ENCODE measurements at regions of chr12 and their contacts with region 1.

Region 1: DNA sequence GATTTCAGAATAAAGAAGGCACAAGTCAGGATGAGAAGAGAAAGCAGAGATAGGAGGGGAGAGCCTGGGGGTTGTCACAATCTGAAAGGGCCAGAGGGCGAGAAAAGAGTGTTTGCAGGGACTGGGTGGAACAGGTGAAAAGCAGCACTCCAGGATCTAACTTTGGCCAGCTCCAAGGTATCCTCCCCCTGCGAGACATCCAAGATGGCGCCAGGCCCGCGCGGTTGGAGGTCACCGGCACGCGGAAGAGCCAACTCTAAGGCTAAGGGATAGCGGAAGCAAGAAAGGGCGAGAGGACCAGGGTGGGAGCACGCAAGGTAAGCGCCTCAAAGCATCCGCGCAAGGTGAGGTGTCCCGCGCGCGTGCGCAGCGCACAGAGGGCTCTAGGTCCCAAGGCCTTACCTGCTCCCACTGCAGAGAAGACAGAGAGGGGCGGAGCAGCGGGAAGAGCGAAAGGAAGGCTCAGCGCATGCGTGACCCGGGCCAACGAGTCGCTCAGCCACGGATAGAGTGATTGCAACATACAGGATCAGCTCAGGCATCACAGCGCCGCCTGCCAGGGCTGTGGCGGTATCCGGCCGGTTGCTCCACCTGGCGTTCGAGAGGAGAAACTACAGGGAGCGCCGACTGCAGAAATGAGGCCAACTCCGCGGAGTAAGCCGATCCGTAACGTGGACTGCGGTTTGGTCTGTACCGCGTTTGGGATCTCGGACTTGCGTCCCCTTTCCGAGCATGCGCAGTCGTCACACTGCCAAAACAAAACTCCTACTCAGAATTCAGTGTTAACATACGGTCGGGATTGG is at the start of gene ATP5MC2:
- DNase-seq: peak; percentile 88
- H3K4me3 ChIP-seq: peak within 1 kb of the TSS; percentile 90
- CTCF ChIP-seq: peak; percentile 100

Region 2: DNA sequence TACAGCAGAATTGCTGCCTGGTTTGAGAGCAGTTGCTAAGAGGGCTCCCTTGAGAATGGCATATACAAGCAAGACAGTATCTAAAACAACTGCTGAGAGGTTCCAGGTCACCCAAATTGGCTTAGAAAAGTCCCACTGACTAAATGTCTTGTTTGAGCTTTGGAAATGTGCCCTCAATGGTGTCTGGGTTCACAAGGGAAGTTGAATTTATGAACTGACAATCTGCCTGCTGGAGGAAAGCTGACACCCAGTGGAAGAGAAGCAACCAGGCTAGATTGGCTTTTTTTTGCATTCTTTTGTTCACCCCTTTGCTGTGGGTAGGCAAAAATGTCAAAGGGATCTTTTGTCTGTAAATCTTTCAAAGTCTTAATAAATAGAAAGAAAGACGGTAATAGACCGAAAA is 124.0 kb before region 1 on chr12:
- CTCF ChIA-PET with region 1: interaction called, 28 read pairs
- POLR2A ChIA-PET with region 1: no interaction called
- DNase-seq: no peak
- H3K4me3 ChIP-seq: no peak overlapping the region
- CTCF ChIP-seq: no peak

Region 3: GRCh38 chr12:53568809-53569557 is 106.9 kb before region 1 on chr12:
- CTCF ChIA-PET with region 1: interaction called, 17 read pairs
- POLR2A ChIA-PET with region 1: no interaction called
- DNase-seq: no peak
- H3K4me3 ChIP-seq: no peak overlapping the region
- CTCF ChIP-seq: no peak

Region 4: GRCh38 chr12:53625946-53626701 is 49.7 kb before region 1 on chr12 and contains the start of gene ATF7:
- CTCF ChIA-PET with region 1: interaction called, 39 read pairs
- POLR2A ChIA-PET with region 1: no interaction called
- DNase-seq: peak; percentile 80
- H3K4me3 ChIP-seq: peak within 1 kb of the TSS; percentile 86
- CTCF ChIP-seq: peak; percentile 1

Region 5: GRCh38 chr12:53652366-53652765 is 23.5 kb before region 1 on chr12:
- CTCF ChIA-PET with region 1: interaction called, 10 read pairs
- POLR2A ChIA-PET with region 1: no interaction called
- DNase-seq: peak; percentile 59
- H3K4me3 ChIP-seq: no peak overlapping the region
- CTCF ChIP-seq: no peak

Region 6: DNA sequence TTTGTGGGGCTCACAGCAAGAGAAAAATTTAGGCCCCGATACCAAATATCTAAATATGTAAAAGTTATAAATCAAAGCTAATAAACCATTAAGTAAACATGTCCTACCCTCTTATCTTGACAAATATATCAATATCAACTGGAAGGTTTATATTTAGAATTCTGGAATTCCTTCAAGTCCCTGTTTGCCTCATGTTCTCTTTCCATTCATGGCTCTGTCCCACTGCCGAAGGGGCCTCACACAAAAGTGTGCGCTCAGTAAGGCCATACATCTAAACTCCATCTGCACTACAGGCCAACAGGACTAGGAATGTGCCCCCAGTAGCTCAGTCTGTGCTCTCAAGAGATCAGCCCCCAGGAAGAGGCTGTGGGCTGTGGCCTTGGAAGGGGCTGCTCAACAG is 10.6 kb after region 1 on chr12:
- CTCF ChIA-PET with region 1: interaction called, 28 read pairs
- POLR2A ChIA-PET with region 1: no interaction called
- DNase-seq: no peak
- H3K4me3 ChIP-seq: no peak overlapping the region
- CTCF ChIP-seq: no peak

Region 7: DNA sequence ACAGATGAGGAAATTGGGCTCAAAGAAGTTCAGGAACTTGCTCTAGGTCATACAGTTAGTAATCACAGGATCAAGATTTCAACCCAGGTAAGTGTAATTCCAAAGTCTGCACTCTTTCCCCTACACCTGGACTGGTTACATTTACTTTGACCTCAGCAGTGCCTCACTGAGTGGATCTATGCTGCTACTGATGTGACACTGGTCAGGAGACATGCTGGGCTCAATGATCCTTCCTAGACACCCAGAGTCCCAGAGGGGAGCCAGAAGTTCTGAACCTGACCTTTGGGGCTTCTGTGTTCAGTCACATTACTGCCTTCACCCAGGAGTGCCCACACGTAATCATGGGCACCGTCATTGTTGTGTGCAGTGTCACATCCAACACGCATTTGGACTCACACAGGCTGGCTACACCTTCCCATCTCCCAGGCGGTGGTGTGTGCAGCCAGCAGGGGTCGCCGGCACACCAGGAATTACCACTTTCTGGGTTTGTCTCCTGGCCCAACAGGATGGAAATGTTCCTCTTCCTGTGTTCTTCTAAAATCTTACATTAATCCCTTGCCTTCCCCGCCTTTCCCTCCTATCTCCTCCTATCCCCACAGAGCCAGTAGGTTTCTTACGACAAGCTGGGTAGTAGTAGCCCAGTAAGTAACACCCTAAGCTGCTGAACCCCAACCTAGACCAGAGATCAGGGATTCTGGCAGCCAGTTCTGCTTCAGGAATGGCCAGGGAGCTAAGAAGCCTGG is 25.8 kb after region 1 on chr12:
- CTCF ChIA-PET with region 1: interaction called, 11 read pairs
- POLR2A ChIA-PET with region 1: no interaction called
- DNase-seq: no peak
- H3K4me3 ChIP-seq: no peak overlapping the region
- CTCF ChIP-seq: peak; percentile 96